ENCODE measurements at regions of chr2 and their contacts with region 1.

Region 1: DNA sequence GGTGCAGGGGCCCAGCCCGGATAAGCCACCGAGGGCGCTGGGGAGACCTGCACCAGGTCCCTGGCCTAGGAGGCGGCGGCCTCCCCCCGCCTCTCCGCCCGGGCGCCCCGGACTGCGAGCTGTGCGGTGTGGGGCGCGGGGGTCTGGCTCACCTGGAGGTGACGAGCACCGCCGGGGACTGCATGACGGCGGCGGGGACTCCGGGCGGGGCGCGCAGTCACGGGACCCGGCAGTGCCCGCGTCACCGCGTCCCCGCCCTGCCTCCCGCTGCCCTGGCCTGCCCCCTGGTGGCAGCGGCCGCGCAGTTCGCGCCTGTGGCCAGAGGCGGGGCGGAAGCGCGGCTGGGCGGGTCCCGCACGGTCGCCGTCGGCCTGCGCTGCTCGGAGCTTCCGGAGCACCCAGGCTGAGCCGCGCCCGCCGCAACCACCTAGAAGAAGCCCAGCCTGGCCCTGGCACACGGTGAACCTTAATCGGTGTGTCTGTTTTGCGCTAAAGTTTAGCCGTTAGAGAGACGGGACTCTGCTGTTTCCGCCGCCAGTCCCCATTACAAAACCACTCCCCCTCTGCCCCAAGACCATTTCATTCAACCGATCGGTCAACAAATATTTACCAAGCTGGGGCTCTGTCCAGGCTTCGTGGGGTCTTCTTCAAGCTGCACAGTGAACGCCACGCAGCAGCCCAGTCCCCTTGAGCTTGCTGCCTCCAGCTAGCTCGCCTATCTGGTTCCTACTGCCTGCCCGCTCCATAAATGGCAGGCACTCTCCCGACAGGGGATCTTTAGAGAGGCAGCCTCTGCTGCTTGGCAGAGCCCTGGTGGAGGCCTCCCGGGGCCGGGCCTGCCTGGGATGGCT is at the start of gene HS1BP3:
- DNase-seq: peak; percentile 89
- H3K4me3 Mint-ChIP-seq: peak within 1 kb of the TSS; percentile 83
- H3K27ac Mint-ChIP-seq: peak within 1 kb of the TSS; percentile 79
- H3K4me1 Mint-ChIP-seq: peaks cover 24% of the 10 kb centered on the region
- H3K27me3 Mint-ChIP-seq: no peaks in the 10 kb centered on the region
- total RNA-seq, gene HS1BP3: 10.1 to 10.4 TPM

Region 2: GRCh38 chr2:20350753-20351554 is 300.2 kb before region 1 on chr2 and contains the start of gene PUM2:
- CTCF ChIA-PET with region 1: interaction called, 13 read pairs
- POLR2A ChIA-PET with region 1: no interaction called
- intact Hi-C with region 1: loop called (anchors 1 kb)
- DNase-seq: peak; percentile 97
- H3K4me3 Mint-ChIP-seq: no peak within 1 kb of the TSS
- H3K27ac Mint-ChIP-seq: peak within 1 kb of the TSS; percentile 93
- H3K4me1 Mint-ChIP-seq: peaks cover 31% of the 10 kb centered on the region
- H3K27me3 Mint-ChIP-seq: no peaks in the 10 kb centered on the region
- total RNA-seq, gene PUM2: 122 TPM

Region 3: DNA sequence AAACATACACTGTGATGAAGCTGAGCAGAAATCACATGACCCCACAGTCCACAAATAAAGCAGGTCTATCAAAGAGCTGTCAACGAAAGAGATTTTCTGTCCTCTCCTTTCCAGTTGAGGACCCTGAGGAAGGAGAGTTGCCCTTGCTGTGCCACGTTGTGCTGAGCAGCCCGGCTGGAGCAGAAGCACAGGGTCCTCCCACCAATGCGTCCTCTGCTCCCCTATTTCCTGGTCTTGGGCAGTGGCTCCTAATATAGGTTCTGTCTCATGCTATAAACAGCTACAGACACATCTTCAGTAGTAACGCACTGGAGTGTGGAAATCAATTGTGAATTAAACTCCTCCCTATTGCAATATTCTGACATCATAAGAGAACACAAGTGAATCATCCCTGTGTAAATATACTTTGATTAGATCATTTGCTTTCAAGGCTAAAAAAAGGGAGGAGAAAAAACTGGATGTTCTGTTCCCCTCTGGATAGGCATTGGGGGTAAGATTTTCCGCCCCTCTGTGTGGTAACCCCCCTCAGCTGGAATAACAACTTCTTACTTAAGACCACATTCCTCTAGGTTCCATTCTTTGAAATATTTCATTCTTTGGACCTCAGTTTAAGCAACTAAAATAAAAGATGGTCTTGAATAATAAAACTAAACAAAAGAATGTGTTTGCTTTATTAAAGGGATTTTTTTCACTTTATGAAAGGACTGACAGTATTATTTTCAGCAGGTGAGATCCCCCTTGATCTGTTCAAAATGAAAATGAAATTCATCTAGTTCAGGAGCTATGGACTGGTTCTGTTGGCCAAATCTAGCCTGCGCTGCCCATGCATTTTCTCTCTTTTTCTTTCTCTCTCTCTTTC is 212.5 kb before region 1 on chr2:
- CTCF ChIA-PET with region 1: interaction called, 27 read pairs
- POLR2A ChIA-PET with region 1: no interaction called
- intact Hi-C with region 1: no loop called
- DNase-seq: peak; percentile 3
- H3K4me3 Mint-ChIP-seq: no peak overlapping the region
- H3K27ac Mint-ChIP-seq: no peak overlapping the region
- H3K4me1 Mint-ChIP-seq: peaks cover 2% of the 10 kb centered on the region
- H3K27me3 Mint-ChIP-seq: peaks cover 14% of the 10 kb centered on the region

Region 4: GRCh38 chr2:20635675-20636584 is 15.2 kb before region 1 on chr2:
- CTCF ChIA-PET with region 1: interaction called, 13 read pairs
- POLR2A ChIA-PET with region 1: no interaction called
- intact Hi-C with region 1: no loop called
- DNase-seq: peak; percentile 69
- H3K4me3 Mint-ChIP-seq: no peak overlapping the region
- H3K27ac Mint-ChIP-seq: no peak overlapping the region
- H3K4me1 Mint-ChIP-seq: no peaks in the 10 kb centered on the region
- H3K27me3 Mint-ChIP-seq: no peaks in the 10 kb centered on the region

Region 5: DNA sequence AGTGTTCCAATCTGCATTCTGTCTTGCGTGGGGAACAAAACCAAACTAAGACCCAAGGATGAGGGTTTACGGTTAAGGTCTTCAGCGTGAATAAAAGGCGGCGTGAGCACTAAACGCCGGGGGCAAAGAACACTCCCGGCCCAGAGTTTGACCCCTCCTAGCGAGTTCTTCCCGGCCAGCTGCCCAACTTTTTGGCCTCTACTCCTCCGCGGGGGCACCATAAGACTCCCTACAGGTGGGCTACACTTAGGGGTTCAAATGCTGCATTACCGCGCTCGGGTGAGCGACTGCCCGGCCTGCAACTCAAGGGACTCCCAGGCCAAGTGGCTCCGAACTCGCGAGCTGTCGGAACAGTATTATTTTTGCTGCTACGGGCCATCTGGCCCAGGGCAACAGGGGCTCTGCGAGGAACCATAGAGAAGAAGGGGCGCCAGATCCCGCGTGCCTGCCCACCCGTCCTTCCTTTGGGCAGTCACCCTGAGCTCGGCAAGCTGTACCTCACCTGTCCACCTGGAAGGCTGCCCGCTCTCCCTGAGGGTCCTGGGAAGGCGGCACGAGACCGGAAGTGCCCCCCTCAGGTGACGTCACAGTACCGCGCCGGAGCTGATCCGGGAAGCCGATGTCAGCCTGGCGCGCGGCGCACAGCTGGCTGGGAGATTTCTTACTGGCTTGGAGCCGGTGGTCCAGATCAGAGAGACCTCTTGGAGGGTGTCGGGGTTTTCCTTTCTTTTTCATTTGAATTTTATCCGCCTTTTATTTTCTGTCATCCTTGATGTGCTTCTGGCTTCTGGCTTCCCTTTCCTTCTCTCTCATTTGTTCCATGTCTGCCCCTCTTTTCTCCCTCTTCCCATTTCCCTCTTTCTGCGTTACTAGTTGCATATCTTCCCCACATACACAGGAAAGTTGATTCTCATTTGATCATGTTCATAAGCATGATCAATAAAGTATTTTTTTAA is 171.7 kb after region 1 on chr2 and contains the start of gene LDAH:
- CTCF ChIA-PET with region 1: interaction called, 4 read pairs
- POLR2A ChIA-PET with region 1: no interaction called
- intact Hi-C with region 1: loop called (anchors 2 kb)
- DNase-seq: peak; percentile 90
- H3K4me3 Mint-ChIP-seq: peak within 1 kb of the TSS; percentile 96
- H3K27ac Mint-ChIP-seq: peak within 1 kb of the TSS; percentile 99
- H3K4me1 Mint-ChIP-seq: peaks cover 32% of the 10 kb centered on the region
- H3K27me3 Mint-ChIP-seq: no peaks in the 10 kb centered on the region
- total RNA-seq, gene LDAH: 35.2 to 38.7 TPM